Activated naive CD4-positive, alpha-beta T cell treated with anti-CD3 and anti-CD28 coated beads, Interleukin-2, amount 10 ng/mL, durations not matched to agents 7 days and 5 days (primary cell): ENCODE measurements at regions of chr17 and their contacts with region 1.

Region 1: DNA sequence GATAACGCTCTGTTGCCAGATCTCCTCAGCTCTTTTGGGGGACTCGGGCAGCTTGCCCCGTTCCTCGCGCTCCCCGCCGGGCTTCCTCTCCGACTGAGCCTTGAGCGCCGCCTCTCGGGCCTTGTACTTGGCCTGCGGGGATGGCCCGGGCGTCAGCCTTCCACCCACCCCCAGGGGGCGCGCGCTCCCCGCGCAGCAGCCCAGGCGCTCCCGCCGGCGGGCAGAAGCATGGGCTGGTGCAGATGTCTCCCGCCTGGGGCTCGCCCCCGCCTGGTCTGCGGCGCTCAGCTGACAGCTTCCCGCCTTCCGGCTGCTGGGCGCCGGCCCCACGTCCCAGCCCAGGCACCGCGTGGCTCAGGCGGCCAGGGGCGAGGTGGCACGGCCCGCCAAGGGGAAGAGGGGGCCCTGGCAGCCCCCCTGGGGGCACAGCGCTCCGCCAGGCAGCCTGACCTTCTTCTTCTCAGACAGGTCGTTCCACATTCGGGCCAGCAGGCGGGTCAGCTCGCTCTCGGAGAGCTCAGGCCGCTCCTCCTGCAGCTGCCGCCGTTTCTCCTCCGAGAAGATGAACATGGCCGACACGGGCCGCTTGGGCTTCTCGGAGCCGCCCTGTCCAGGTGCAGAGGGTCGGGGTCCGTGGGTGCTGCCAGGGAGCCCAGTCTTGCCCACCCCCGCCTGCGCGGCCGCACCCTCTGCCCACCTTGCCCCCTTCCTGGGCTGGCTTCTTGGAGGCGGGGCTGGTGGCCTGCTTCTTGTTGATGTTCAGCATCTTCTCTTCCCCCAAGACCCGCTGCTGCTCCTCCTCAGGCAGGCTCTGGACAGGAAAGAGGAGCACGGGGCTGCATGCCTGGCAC is 8.9 kb downstream of the UBTF start:
- DNase-seq: peak; percentile 93
- H3K4me3 Mint-ChIP-seq: peak overlapping the region; percentile 53
- H3K27ac Mint-ChIP-seq: peak overlapping the region; percentile 85
- H3K4me1 Mint-ChIP-seq: peaks cover 59% of the 10 kb centered on the region
- H3K27me3 Mint-ChIP-seq: no peaks in the 10 kb centered on the region

Region 2: DNA sequence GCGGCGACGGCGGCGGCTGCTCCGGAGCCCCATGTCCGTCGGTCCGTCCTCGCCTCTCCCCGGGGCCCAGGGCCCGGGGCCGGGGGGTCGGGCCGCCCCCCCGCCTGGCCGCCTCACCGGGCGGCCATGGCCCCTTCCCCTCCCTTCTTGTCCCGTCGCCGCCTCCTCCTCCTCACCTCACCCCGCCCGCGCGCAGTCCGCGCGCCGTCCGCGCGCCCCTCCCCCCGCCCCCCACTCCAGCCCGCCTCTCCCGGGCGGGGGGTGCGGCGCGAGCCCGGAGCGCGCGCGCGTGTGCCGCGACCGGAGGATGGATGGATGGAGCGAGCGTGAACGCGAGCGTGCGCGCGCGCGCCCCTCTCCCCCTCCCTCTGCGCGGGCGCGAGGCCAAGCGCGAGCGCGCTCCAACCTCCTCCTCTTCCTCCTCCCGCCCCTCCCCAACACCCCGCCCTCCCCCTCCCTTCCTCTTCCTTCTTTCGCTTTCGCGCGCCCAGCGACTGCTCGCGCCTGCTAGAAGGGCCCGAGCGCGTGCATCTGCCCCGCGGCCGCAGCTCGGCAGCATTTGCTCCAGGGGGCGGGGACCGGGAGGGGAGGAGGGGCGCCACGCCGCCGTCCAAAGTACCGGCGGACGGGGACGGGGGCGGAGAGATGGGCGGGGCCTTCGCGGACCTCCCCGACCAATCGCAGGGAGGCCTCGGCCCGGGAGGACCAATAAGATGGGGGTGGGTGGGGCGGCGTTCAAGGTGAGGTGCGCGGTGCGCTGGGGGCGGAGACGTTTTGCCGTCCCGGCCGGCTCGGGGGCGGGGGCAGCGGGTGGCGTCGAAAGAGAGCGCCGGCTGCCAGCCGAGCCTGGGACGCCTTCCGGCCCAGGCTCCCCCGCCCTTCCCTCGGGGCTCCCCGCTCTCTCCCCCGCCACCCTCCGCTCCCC is 10.8 kb before region 1 on chr17 and contains the start of gene ATXN7L3:
- CTCF ChIA-PET with region 1: interaction called, 20 read pairs
- DNase-seq: peak; percentile 100
- H3K4me3 Mint-ChIP-seq: peak within 1 kb of the TSS; percentile 93
- H3K27ac Mint-ChIP-seq: peak within 1 kb of the TSS; percentile 99
- H3K4me1 Mint-ChIP-seq: peaks cover 57% of the 10 kb centered on the region
- H3K27me3 Mint-ChIP-seq: no peaks in the 10 kb centered on the region

Region 3: DNA sequence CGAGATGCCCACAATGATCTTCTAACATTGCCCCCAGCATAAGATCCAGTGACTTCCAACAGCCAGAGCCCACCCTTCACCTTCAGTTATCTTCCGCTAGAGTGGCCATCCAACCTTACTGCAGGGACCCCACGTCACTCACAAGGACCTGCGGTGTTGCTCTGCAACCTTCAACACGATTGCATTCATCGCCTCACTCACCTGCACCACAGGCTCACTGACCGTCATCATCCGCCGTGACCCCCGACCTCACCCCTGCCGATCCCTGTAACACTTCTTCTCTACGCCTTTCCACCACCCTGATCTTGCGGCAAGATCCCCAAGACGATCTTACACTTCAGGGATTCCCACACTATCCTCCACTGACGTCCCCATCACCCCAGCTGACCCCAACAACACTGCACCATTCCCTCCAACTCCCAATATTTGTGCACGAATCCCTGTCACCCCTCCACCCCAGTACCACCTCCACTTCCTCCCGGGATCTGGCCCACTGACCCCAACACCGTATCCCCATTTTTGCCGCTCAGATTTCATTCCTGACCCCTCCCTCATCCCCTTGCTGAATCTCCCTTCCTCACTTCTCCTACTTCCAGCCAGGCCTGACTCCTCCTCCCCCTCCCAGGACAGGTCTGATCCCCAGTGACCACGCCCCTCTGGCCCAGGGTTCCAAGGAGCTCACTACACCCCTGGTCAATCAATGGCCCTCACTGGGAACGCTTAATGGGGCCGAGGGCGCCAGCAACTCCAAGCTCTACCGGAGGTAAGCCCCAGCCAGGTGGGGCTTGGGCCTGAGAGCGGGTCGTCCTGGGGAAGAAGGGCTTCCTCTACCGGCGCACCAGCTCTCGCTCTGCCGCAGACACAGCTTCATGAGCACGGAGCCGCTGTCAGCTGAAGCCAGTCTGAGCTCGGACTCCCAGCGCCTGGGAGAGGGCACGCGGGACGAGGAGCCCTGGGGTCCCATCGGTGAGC is 105.5 kb after region 1 on chr17:
- CTCF ChIA-PET with region 1: interaction called, 30 read pairs
- DNase-seq: no peak
- H3K4me3 Mint-ChIP-seq: peak overlapping the region; percentile 55
- H3K27ac Mint-ChIP-seq: no peak overlapping the region
- H3K4me1 Mint-ChIP-seq: peaks cover 13% of the 10 kb centered on the region
- H3K27me3 Mint-ChIP-seq: peaks cover 70% of the 10 kb centered on the region

Region 4: DNA sequence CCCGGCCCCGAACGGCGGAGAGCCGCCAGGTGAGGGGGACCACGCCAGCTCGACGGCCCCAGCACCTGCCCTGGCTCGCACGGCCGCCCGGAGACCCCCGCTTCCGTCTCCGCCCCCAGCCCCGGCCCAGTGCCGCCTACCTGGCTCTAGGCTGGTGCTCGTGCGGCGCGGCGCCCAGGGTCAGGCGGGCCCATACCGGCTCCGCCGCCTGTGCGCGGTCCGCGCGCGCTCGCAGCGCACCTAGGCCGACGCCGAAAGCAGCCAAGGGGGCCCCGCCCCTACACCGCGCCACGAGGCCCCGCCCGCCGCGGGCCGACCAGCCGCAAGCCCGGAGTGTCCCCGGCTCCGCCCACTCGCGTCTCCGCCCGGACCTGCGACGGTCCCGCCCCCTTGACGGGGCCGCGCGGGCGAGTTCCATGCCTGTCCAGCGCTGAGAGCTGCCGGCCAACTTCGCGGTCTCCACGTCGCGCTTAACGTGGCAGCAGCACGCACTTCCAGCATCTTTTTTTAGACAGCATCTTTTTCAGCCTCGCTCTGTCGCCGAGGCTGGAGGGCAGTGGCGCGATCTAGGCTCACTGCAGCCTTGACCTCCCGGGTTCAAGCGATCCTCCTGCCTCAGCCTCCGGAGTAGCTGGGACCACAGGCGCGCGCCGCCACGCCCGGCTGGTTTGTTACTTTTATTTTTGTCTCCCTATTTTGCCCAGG is 114.2 kb after region 1 on chr17 and contains the start of gene SLC25A39:
- CTCF ChIA-PET with region 1: interaction called, 47 read pairs
- DNase-seq: peak; percentile 93
- H3K4me3 Mint-ChIP-seq: peak within 1 kb of the TSS; percentile 87
- H3K27ac Mint-ChIP-seq: peak within 1 kb of the TSS; percentile 99
- H3K4me1 Mint-ChIP-seq: peaks cover 35% of the 10 kb centered on the region
- H3K27me3 Mint-ChIP-seq: no peaks in the 10 kb centered on the region

Region 5: DNA sequence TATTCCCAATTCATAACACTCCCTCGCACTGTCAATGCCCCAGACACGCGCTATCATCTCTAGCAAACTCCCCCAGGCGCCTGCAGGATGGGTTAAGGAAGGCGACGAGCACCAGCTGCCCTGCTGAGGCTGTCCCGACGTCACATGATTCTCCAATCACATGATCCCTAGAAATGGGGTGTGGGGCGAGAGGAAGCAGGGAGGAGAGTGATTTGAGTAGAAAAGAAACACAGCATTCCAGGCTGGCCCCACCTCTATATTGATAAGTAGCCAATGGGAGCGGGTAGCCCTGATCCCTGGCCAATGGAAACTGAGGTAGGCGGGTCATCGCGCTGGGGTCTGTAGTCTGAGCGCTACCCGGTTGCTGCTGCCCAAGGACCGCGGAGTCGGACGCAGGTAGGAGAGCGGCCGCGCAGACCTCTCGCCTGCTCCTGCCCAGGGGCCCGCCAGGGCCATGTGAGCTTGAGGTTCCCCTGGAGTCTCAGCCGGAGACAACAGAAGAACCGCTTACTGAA is 134.4 kb after region 1 on chr17 and contains the start of gene GRN:
- CTCF ChIA-PET with region 1: interaction called, 21 read pairs
- DNase-seq: peak; percentile 93
- H3K4me3 Mint-ChIP-seq: peak within 1 kb of the TSS; percentile 87
- H3K27ac Mint-ChIP-seq: peak within 1 kb of the TSS; percentile 51
- H3K4me1 Mint-ChIP-seq: peaks cover 28% of the 10 kb centered on the region
- H3K27me3 Mint-ChIP-seq: peaks cover 31% of the 10 kb centered on the region

Region 6: GRCh38 chr17:44350733-44351226 is 140.2 kb after region 1 on chr17:
- CTCF ChIA-PET with region 1: interaction called, 21 read pairs
- DNase-seq: peak; percentile 83
- H3K4me3 Mint-ChIP-seq: no peak overlapping the region
- H3K27ac Mint-ChIP-seq: no peak overlapping the region
- H3K4me1 Mint-ChIP-seq: peaks cover 18% of the 10 kb centered on the region
- H3K27me3 Mint-ChIP-seq: peaks cover 17% of the 10 kb centered on the region

Region 7: DNA sequence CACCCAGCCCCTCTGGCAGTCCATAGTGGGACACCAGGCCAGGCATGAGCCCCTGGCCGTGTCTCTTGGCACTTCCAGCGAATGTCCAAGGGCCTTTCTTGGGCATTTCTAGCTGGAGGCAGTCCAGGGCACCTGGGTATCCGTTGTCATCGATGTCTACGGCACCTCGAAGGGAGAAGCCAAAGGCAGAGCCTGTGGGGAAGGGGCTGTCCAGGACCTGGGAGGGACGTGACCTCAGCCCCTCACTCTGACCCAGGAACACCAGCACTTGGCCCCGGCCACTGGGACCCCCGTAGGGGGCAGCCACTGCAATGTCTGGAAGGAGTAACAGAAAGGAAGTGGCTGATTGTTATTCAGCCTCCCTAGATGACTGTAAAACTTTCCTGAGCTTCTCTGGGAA is 170.2 kb after region 1 on chr17:
- CTCF ChIA-PET with region 1: no interaction called
- DNase-seq: no peak
- H3K4me3 Mint-ChIP-seq: no peak overlapping the region
- H3K27ac Mint-ChIP-seq: no peak overlapping the region
- H3K4me1 Mint-ChIP-seq: peaks cover 6% of the 10 kb centered on the region
- H3K27me3 Mint-ChIP-seq: peaks cover 75% of the 10 kb centered on the region